Dendritic cell treated with granulocyte-macrophage colony-stimulating factor and Interleukin-4, amounts not matched to agents 40 ng/mL and 50 ng/mL, for 4 days (primary cell): ENCODE measurements at regions of chr16 and their contacts with region 1.

Region 1: DNA sequence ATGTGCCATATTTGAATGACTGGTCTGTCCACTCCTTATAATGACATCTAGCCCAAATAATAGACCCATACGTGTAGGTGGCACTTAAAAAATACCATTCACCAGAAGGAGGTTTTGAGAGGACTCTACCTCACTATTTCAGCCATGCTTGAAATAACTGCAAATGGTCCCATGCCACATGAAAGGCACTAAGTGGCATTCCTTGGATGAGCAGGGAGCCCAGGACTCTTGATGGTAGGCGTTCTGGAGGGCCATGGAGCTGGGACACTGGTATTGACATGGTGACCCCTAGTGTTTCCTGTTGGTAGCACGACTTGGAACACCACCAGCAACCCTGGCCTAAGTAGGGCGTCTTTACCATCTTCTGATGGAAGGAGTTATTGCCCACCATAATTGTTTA is 148.7 kb upstream of the ZFHX3 start:
- H3K4me3 Mint-ChIP-seq: no peak overlapping the region
- H3K27ac Mint-ChIP-seq: no peak overlapping the region
- H3K4me1 Mint-ChIP-seq: peaks cover 8% of the 10 kb centered on the region
- H3K27me3 Mint-ChIP-seq: peaks cover 18% of the 10 kb centered on the region

Region 2: DNA sequence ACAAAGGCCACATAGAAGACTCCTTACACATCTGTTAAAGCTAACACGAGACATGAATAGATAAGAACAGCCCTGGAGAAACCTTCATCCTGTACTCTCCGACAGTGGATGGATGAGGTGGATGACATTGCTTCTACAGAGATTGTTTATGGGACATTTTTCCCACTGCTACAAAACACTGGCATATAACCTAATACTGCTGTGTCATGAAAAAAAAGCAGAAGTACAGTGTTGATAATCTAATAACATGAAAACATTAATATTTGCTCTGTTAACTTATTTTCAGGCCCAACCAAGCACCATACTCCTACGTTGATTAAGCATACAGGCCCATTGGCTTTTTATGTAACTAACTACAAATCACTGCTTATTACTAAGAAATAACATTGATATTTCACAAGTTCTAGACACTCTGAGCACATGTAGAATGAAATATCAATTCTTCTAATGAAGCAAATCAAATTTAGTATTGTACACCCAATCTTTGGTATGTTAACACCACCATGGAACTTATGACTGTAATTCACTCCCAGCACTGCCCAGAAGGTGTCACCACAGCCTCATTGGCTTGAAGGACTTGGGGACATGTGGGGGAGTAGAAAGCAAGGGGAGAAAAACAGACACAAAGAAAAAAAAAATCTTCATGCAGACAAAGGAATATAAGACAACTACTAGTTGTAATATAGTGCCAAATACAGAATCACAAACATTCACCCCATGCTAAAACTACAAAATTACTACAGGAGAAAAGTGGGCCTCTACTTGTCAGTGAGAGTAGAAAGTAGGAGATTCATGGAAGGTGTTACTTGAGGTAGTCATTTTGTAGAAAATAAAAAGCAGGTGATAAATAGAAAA is 694.7 kb before region 1 on chr16:
- intact Hi-C with region 1: loop called (anchors 5 kb)
- H3K4me3 Mint-ChIP-seq: no peak overlapping the region
- H3K27ac Mint-ChIP-seq: no peak overlapping the region
- H3K4me1 Mint-ChIP-seq: no peaks in the 10 kb centered on the region
- H3K27me3 Mint-ChIP-seq: no peaks in the 10 kb centered on the region

Region 3: GRCh38 chr16:72832621-72833248 is 363.9 kb before region 1 on chr16:
- intact Hi-C with region 1: loop called (anchors 1 kb)
- H3K4me3 Mint-ChIP-seq: no peak overlapping the region
- H3K27ac Mint-ChIP-seq: no peak overlapping the region
- H3K4me1 Mint-ChIP-seq: no peaks in the 10 kb centered on the region
- H3K27me3 Mint-ChIP-seq: no peaks in the 10 kb centered on the region

Region 4: GRCh38 chr16:73036074-73036826 is 160.4 kb before region 1 on chr16:
- intact Hi-C with region 1: loop called (anchors 5 kb)
- H3K4me3 Mint-ChIP-seq: peak overlapping the region; percentile 30
- H3K27ac Mint-ChIP-seq: peak overlapping the region; percentile 56
- H3K4me1 Mint-ChIP-seq: peaks cover 70% of the 10 kb centered on the region
- H3K27me3 Mint-ChIP-seq: peaks cover 27% of the 10 kb centered on the region

Region 5: DNA sequence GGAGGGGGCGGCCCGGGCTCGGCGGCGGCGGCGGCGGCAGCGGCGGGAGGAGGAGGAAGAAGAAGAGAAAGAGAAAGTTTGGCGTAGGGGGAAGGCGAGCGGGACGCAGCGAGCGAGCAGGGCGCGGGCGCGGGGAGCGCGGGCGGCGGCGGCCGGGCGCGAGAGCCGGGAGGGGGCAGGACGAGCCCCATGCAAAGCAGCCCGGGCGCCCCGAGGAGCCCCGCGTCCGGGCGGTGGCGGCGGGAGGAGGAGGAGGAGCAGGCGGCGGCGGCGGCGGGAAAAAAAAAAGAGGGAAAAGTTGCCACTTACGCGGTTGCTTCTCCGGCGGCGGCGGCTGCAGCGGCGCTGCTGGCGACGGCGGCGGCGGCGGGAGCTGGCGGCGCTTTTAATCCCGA is 138.5 kb before region 1 on chr16:
- intact Hi-C with region 1: loop called (anchors 2 kb)
- H3K4me3 Mint-ChIP-seq: peak overlapping the region; percentile 90
- H3K27ac Mint-ChIP-seq: peak overlapping the region; percentile 92
- H3K4me1 Mint-ChIP-seq: peaks cover 57% of the 10 kb centered on the region
- H3K27me3 Mint-ChIP-seq: peaks cover 40% of the 10 kb centered on the region